Adrenal gland (tissue), 19 donors: ENCODE measurements at regions of chr1 and their contacts with region 1.

Region 1: GRCh38 chr1:167442124-167442848 is 76.0 kb downstream of the CD247 start:
- DNase-seq: peak; percentile 79 to 90 (median 86)
- H3K4me3 ChIP-seq: no peak overlapping the region
- H3K27ac ChIP-seq: no peak overlapping the region
- H3K4me1 ChIP-seq: peaks cover 8 to 11% of the 10 kb centered on the region in 2 donors
- H3K27me3 ChIP-seq: no peaks in the 10 kb centered on the region
- CTCF ChIP-seq: peak; percentile 81 to 92 (median 88)
- POLR2A ChIP-seq: no peak

Region 2: DNA sequence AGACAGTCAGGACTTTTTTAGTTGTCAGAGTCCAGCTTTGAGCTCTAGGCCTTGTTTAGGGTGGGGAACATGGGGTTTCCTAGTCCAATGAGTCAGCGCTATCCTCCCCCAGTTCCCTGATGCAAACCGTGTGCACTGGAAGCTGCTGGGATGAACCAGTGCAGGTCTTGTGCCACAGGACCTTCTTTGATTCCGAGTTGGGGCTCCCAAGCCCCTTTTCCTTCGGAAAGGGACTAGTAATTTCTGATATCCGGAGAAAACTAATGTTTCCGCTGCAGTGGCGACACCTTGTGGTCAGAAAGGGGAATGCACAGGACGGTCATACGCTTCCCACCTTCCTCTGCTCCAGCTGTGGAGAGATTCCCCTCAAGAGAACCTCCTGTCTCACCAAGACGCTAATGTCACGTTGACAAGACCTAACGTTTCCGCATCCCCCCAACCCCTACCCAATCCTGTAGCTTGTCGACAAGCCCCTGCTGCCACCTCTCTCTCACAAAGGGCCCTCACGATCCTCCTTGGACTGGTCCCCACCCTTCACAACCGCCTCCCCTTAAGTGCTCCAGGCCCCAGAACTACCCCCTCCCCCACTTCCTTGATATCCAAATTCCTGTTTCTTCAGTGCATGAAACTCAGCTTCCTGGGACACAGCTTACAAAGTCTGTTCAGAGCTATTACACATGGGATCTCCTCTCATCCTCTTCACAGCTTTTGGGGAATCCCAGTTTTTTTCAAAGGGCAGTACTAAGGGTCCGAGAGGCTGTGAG is 383.1 kb before region 1 on chr1:
- intact Hi-C with region 1: loop called in 1 of 2 experiments (anchors 5 kb)
- DNase-seq: peak; percentile 50 to 89 (median 73)
- H3K4me3 ChIP-seq: no peak overlapping the region
- H3K27ac ChIP-seq: no peak overlapping the region
- H3K4me1 ChIP-seq: no peaks in the 10 kb centered on the region
- H3K27me3 ChIP-seq: peaks cover 9% of the 10 kb centered on the region
- CTCF ChIP-seq: peak; percentile 78 to 97 (median 90)
- POLR2A ChIP-seq: no peak

Region 3: GRCh38 chr1:167066333-167067122 is 375.8 kb before region 1 on chr1:
- intact Hi-C with region 1: loop called (anchors 2 to 5 kb)
- DNase-seq: peak; percentile 52 to 88 (median 80)
- H3K4me3 ChIP-seq: peak overlapping the region in 1 of 4 donors; percentile 17
- H3K27ac ChIP-seq: no peak overlapping the region
- H3K4me1 ChIP-seq: peaks cover 3 to 7% of the 10 kb centered on the region in 2 donors
- H3K27me3 ChIP-seq: peaks cover 3% of the 10 kb centered on the region
- CTCF ChIP-seq: peak; percentile 87 to 96 (median 90)
- POLR2A ChIP-seq: no peak

Region 4: DNA sequence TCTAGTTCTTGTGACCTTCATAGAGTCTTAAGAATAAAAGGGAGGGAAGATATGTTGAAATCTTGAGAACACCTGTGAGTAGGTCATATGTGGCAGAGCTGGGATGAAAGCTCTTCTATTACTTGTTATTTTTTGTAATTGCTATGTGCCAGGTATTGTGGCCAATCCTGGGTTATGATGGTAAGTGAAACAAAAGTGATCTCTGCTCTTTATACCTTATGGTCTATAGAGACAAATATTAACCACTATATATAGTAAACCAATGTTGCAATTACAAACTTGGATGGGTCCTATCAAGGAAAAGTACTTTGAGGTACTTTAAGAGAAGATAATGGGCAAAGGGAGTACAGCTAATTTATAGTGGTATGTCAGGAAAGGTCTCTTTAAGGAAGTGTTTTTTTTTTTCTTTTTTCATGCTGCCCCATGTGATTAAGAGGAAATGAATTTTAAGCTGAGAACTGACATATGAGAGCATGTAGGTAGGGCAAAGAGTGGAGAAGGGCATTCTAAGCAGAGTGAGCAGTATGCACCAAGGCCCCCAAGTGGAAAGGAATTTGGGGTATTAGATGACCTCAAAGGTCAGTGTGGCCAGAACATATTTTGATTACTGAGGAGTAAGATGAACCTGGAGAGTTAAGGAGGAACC is 178.3 kb before region 1 on chr1:
- intact Hi-C with region 1: loop called (anchors 5 kb)
- DNase-seq: no peak
- H3K4me3 ChIP-seq: no peak overlapping the region
- H3K27ac ChIP-seq: no peak overlapping the region
- H3K4me1 ChIP-seq: peaks cover 5 to 51% of the 10 kb centered on the region in 2 donors
- H3K27me3 ChIP-seq: no peaks in the 10 kb centered on the region
- CTCF ChIP-seq: no peak
- POLR2A ChIP-seq: no peak

Region 5: GRCh38 chr1:167401260-167401873 is 40.9 kb before region 1 on chr1:
- intact Hi-C with region 1: loop called in 1 of 2 experiments (anchors 5 kb)
- DNase-seq: peak; percentile 51 to 82 (median 71)
- H3K4me3 ChIP-seq: no peak overlapping the region
- H3K27ac ChIP-seq: no peak overlapping the region
- H3K4me1 ChIP-seq: peaks cover 0 to 10% of the 10 kb centered on the region in 2 donors
- H3K27me3 ChIP-seq: no peaks in the 10 kb centered on the region
- CTCF ChIP-seq: peak; percentile 42 to 67 (median 58)
- POLR2A ChIP-seq: no peak